H1 (cell line): ENCODE measurements at regions of chr11 and their contacts with region 1.

Region 1: DNA sequence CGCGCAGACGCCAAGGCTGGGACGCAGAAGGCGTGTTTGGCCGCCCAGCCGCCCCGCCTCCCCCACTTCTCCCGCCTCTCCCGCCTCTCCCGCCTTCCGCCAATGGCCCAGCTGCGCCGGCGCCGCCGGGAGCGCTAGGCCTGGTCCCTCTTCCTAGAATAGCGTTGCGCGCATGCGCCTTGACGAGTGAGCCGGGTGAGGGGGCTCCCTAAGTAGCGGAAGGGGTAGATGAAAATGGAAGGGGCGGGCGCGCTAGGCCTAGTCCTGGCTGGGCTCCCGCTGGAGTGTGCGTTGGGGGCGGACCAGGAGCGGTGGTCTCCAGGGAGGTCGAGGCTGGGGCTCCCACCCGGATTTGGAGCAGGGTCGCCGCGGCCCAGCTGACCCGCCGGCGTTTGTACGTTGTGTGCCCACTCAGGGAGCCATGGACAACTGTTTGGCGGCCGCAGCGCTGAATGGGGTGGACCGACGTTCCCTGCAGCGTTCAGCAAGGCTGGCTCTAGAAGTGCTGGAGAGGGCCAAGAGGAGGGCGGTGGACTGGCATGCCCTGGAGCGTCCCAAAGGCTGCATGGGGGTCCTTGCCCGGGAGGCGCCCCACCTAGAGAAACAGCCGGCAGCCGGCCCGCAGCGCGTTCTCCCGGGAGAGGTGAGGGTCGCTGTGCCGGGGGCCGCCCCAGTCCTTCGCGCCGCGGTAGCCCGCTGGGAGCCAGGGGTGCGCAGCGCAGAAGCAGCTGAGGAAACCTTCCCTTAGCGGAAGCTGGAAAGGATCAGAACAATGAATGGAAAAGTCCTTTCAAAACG is at the start of gene AKIP1:
- DNase-seq: peak; percentile 94 to 96
- H3K4me3 ChIP-seq: peak within 1 kb of the TSS; percentile 74 to 90 (median 83)
- H3K27ac ChIP-seq: peak within 1 kb of the TSS; percentile 55
- H3K4me1 ChIP-seq: peaks cover 0 to 8% (median 1%) of the 10 kb centered on the region in 4 experiments; a peak in 5 of 7 replicates
- H3K27me3 ChIP-seq: peaks cover 0 to 12% (median 5%) of the 10 kb centered on the region in 4 experiments; a peak in 3 of 7 replicates
- CTCF ChIP-seq: no peak
- EP300 ChIP-seq: 0 out of 3 replicates have a peak, but pooled peaks of 1 of the 2 experiments have one; percentile 4
- POLR2A ChIP-seq: peak in 1 of 2 experiments; percentile 14; a peak in 2 of 3 replicates
- RAD21 ChIP-seq: no peak
- total RNA-seq, gene AKIP1: 17.8 and 19.9 TPM in 2 replicates

Region 2: GRCh38 chr11:8922691-8923090 is 11.5 kb after region 1 on chr11:
- CTCF ChIA-PET with region 1: interaction called, 20 read pairs
- POLR2A ChIA-PET with region 1: interaction called, 4 read pairs
- DNase-seq: no peak
- H3K4me3 ChIP-seq: no peak overlapping the region
- H3K27ac ChIP-seq: no peak overlapping the region
- H3K4me1 ChIP-seq: no peaks in the 10 kb centered on the region
- H3K27me3 ChIP-seq: no peaks in the 10 kb centered on the region
- CTCF ChIP-seq: no peak
- EP300 ChIP-seq: no peak
- POLR2A ChIP-seq: no peak
- RAD21 ChIP-seq: no peak

Region 3: DNA sequence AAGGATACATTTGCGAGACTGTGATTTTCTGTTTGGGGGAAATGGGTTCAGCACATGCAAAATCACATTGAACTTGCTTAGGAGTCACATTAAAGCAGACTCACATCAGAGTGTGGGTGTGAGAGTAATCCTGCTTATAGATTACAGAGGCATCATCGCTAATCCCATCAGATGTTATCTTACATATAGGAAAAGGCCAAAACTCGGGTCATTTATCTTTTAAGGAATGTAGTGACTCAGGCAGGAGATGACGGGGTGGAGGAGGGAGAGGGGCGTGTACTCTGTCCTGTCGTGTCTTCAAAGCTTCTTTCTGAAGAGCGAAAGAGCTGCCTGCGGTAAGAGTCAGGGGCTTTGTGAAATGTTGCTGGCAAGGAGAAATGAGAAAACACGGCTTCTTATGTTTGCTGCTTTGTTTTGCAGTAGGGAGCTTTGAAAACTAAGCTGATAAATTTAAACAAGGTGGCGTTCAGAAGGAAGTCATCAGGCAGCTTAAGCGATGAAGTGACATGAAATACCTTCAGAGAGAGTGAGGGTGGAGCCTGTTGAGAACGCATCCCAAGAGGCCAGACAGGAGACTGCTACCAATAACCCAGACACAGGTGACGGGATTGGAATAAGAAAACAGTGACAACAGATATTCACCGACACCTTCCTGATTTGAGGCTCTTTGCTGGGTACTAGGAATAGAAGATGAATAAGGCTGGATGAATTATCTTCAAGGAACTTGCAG is 23.7 kb after region 1 on chr11:
- CTCF ChIA-PET with region 1: interaction called, 13 read pairs
- POLR2A ChIA-PET with region 1: interaction called, 3 read pairs
- DNase-seq: no peak
- H3K4me3 ChIP-seq: no peak overlapping the region
- H3K27ac ChIP-seq: no peak overlapping the region
- H3K4me1 ChIP-seq: peaks cover 0 to 8% (median 1%) of the 10 kb centered on the region in 4 experiments; a peak in 2 of 7 replicates
- H3K27me3 ChIP-seq: no peaks in the 10 kb centered on the region
- CTCF ChIP-seq: no peak
- EP300 ChIP-seq: no peak
- POLR2A ChIP-seq: no peak
- RAD21 ChIP-seq: no peak

Region 4: GRCh38 chr11:8956860-8957259 is 45.6 kb after region 1 on chr11:
- CTCF ChIA-PET with region 1: interaction called, 66 read pairs
- POLR2A ChIA-PET with region 1: interaction called, 7 read pairs
- DNase-seq: no peak
- H3K4me3 ChIP-seq: no peak overlapping the region
- H3K27ac ChIP-seq: no peak overlapping the region
- H3K4me1 ChIP-seq: no peaks in the 10 kb centered on the region
- H3K27me3 ChIP-seq: no peaks in the 10 kb centered on the region
- CTCF ChIP-seq: no peak
- EP300 ChIP-seq: no peak
- POLR2A ChIP-seq: no peak
- RAD21 ChIP-seq: no peak

Region 5: GRCh38 chr11:9039194-9039593 is 128.0 kb after region 1 on chr11:
- CTCF ChIA-PET with region 1: no interaction called
- POLR2A ChIA-PET with region 1: no interaction called
- DNase-seq: no peak
- H3K4me3 ChIP-seq: no peak overlapping the region
- H3K27ac ChIP-seq: no peak overlapping the region
- H3K4me1 ChIP-seq: peaks cover 0 to 8% (median 2%) of the 10 kb centered on the region in 4 experiments; a peak in 3 of 7 replicates
- H3K27me3 ChIP-seq: no peaks in the 10 kb centered on the region
- CTCF ChIP-seq: no peak
- EP300 ChIP-seq: no peak
- POLR2A ChIP-seq: no peak
- RAD21 ChIP-seq: no peak